Panc1 (cell line): ENCODE measurements at regions of chr4 and their contacts with region 1.

Region 1: GRCh38 chr4:17447675-17448298 is 64.1 kb downstream of the QDPR start:
- DNase-seq: peak; percentile 50
- ATAC-seq: peak; percentile 84
- H3K4me3 ChIP-seq: no peak overlapping the region
- H3K27ac ChIP-seq: no peak overlapping the region
- H3K4me1 ChIP-seq: no peaks in the 10 kb centered on the region
- H3K27me3 ChIP-seq: no peaks in the 10 kb centered on the region
- CTCF ChIP-seq: peak; percentile 70

Region 2: DNA sequence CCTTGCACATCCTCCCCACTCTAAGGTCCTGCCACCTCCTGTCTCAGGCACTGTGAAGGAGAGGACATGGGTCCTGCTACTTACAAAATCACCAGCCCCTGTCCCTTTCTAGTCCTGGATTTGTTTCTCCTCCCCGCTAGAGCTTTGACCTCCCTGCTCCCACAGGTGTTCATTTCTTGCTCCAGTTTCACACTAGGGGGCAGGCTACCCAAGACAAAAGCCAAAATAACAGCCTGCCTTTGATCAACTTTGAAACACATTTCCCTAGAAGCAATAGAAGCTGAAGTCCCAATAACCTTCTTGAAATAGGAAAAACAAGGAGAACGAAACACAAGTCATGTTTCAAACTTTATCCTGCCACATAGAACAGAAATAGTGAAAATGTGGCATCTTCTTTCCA is 100.3 kb before region 1 on chr4:
- CTCF ChIA-PET with region 1: interaction called, 7 read pairs
- POLR2A ChIA-PET with region 1: no interaction called
- in situ Hi-C with region 1: no loop called
- intact Hi-C with region 1: loop called (anchors 2 kb)
- DNase-seq: no peak
- ATAC-seq: no peak
- H3K4me3 ChIP-seq: no peak overlapping the region
- H3K27ac ChIP-seq: no peak overlapping the region
- H3K4me1 ChIP-seq: no peaks in the 10 kb centered on the region
- H3K27me3 ChIP-seq: no peaks in the 10 kb centered on the region
- CTCF ChIP-seq: peak; percentile 48